ENCODE measurements at regions of chr19 and their contacts with region 1.

Region 1: DNA sequence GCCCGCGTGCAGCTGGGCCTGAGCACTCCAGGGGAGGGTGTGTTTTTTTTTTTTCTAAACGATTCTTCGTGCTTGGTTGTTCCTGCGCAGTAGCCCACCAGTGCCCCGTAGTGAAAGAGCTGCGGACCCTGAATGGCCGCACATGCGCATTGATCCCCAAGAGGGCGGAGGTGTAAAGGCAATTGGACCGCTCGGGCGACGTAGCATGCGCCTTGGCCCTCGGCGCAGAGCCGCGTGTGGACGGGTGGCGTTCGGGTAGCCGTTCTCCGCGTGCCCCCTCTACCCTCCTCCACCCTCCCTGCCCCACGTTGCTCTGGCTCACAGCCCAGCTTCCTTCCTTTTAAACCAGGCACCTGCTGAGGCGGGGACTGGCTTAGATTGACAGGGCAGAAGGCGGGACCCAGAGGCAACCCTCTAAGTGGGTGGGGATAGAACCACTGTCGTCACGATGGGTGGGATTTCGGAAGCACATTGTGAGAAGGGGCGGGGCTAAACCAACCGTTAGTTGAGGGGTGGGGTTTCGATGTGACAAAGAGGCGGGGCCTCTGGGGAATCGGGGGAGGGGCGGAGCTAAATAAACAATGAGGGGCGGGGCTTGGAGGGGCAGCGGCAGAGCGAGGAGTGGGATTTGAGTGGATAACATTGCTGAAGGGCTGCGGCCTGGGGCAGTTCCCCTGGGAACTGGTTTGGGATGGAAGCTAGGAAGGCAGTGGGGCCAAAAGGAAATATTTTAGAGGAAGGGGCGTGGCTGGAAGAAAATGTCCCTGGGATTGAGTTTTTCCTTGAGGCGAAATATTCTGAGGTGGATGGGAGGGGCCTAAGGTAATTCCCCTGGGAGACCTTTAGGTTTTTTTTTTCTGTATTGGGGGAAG is 543 bp upstream of the NUP62 start:
- DNase-seq: peak; percentile 99
- H3K4me3 ChIP-seq: peak overlapping the region; percentile 6 to 99 (median 91)
- H3K27ac ChIP-seq: peak overlapping the region; percentile 79
- H3K4me1 ChIP-seq: peaks cover 10% of the 10 kb centered on the region
- H3K27me3 ChIP-seq: no peaks in the 10 kb centered on the region
- CTCF ChIP-seq: no peak
- POLR2A ChIP-seq: peak; percentile 80

Region 2: GRCh38 chr19:49520705-49521319 is 409.0 kb before region 1 on chr19:
- CTCF ChIA-PET with region 1: no interaction called
- POLR2A ChIA-PET with region 1: no interaction called
- dilution Hi-C with region 1: no loop called
- intact Hi-C with region 1: no loop called
- DNase-seq: no peak
- H3K4me3 ChIP-seq: no peak overlapping the region
- H3K27ac ChIP-seq: no peak overlapping the region
- H3K4me1 ChIP-seq: peaks cover 3% of the 10 kb centered on the region
- H3K27me3 ChIP-seq: no peaks in the 10 kb centered on the region
- CTCF ChIP-seq: no peak
- POLR2A ChIP-seq: no peak

Region 3: DNA sequence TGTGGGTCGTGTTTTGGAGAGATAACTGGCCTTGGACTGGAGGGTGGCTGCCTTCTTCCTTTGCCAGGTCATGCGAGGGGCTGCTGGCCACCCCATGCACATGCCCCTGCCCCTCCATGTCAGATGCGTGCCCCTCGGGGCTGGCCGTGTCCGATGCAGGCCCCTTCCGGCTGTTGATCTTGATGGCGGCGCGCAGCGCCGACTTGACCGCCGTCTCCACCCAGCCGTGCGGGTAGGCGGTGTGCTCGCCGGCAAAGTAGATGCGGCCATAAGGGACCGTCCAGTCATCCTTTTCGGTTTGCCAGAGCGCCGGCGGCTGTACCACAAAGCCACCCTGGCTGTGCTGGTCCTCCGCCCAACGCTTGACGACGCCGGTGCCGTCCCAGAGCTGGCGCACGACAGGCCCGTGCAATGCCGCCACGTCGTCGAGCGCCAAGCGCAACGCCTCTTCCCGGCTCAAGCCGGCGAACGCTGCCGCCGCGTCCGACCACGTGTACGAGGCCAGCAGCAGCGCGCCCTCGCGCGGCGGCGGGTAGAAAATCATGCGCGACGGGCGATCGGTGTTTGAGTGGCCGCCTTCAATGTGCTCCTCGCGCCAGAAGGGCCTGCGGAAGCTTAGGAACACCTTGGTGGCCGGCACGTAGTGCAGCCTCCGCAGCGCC is 40.0 kb before region 1 on chr19:
- CTCF ChIA-PET with region 1: interaction called, 3 read pairs
- POLR2A ChIA-PET with region 1: interaction called, 3 read pairs
- dilution Hi-C with region 1: no loop called
- intact Hi-C with region 1: loop called (anchors 1 kb)
- DNase-seq: peak; percentile 79
- H3K4me3 ChIP-seq: no peak overlapping the region
- H3K27ac ChIP-seq: no peak overlapping the region
- H3K4me1 ChIP-seq: peaks cover 3% of the 10 kb centered on the region
- H3K27me3 ChIP-seq: no peaks in the 10 kb centered on the region
- CTCF ChIP-seq: peak; percentile 92 to 93
- POLR2A ChIP-seq: no peak

Region 4: DNA sequence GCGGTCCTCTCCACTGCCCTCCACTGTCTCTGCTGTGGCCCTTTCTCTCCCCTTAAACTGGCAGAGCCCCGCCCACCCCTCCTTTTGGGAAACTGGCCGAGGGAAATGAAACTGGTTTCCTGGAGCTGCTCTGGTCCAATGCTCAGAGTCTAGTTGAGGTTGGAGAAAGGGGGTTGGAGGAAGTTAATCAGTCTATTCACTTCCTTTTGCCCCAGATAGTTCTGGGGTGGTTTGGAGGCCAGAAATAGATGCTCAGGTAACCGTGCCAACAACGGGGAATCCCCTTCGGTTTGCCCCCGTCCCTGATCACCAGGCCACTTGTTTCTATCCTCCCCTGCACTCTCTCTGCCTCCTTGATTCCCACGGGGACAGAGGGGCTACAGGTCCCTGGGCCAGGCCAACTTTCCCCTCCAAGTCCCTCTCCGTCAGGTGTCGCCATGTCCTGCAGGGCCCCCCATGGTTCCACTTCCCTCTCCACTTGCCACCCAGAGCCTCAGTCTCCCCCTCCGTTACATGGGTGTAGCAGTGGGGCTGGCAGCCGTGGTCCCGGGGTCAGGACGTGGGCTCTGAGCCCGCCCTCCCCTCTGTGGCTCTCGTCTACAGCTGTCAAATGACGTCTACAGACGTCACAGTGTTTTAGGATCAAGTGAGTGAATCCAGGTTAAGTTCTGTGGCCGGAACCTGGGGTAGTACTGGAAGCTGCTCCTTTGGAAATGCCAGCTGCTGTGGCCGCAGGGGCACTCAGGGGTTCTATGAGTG is 32.8 kb before region 1 on chr19 and contains the start of gene IL4I1:
- CTCF ChIA-PET with region 1: interaction called, 3 read pairs
- POLR2A ChIA-PET with region 1: interaction called, 7 read pairs
- dilution Hi-C with region 1: no loop called
- intact Hi-C with region 1: loop called (anchors 2 kb)
- DNase-seq: peak; percentile 73
- H3K4me3 ChIP-seq: peak within 1 kb of the TSS in 1 of 3 experiments; percentile 26
- H3K27ac ChIP-seq: peak within 1 kb of the TSS; percentile 67
- H3K4me1 ChIP-seq: peaks cover 13% of the 10 kb centered on the region
- H3K27me3 ChIP-seq: no peaks in the 10 kb centered on the region
- CTCF ChIP-seq: no peak
- POLR2A ChIP-seq: no peak
- total RNA-seq, gene IL4I1: 5.6 and 9.1 TPM in 2 replicates

Region 5: DNA sequence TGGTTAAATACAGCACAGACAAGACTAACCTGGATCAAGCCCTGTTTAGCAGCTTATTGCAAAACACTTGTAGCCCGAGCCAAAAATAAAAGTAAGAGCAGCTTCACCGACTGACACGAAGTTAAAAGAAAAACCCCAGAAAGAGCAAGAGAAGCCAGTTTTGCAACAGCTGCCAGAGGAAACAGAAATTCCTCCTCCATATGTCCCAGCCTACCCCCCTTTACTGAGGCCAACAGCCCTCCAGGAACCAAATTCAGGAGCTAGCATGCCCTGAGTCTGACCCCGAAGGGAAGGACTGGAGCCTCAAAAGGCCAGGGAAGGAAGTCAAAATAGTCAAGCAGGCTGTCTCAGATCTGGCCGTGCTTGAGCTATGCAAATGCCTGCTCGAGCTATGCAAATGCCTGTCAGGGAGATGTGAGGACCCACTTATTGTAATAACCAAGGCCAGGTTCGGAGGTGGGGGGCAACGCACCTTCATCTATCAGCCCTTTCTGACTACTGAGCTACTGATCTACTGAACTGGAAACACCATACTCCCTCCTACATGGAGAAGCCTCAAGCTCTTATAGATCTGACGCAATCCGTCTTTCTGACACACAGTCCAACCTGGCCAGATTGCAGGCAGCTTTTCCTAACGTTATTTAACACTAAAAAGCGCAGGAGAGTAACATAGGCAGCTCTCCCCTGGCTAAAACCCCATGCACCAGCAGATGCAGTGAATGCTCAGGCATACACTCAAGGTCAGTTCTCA is 24.4 kb after region 1 on chr19:
- CTCF ChIA-PET with region 1: no interaction called
- POLR2A ChIA-PET with region 1: no interaction called
- dilution Hi-C with region 1: no loop called
- intact Hi-C with region 1: no loop called
- DNase-seq: no peak
- H3K4me3 ChIP-seq: no peak overlapping the region
- H3K27ac ChIP-seq: no peak overlapping the region
- H3K4me1 ChIP-seq: peaks cover 5% of the 10 kb centered on the region
- H3K27me3 ChIP-seq: peaks cover 9 to 16% of the 10 kb centered on the region in 2 experiments
- CTCF ChIP-seq: no peak
- POLR2A ChIP-seq: no peak

Measured in endothelial cell of umbilical vein (primary cell).